ENCODE measurements at regions of chr14 and their contacts with region 1.

Region 1: GRCh38 chr14:100285021-100285912 is 21.0 kb downstream of the SLC25A29 start:
- DNase-seq: peak; percentile 88

Region 2: GRCh38 chr14:100239840-100240724 is 45.2 kb before region 1 on chr14:
- intact Hi-C with region 1: loop called (anchors 2 kb)
- DNase-seq: peak; percentile 93

Region 3: DNA sequence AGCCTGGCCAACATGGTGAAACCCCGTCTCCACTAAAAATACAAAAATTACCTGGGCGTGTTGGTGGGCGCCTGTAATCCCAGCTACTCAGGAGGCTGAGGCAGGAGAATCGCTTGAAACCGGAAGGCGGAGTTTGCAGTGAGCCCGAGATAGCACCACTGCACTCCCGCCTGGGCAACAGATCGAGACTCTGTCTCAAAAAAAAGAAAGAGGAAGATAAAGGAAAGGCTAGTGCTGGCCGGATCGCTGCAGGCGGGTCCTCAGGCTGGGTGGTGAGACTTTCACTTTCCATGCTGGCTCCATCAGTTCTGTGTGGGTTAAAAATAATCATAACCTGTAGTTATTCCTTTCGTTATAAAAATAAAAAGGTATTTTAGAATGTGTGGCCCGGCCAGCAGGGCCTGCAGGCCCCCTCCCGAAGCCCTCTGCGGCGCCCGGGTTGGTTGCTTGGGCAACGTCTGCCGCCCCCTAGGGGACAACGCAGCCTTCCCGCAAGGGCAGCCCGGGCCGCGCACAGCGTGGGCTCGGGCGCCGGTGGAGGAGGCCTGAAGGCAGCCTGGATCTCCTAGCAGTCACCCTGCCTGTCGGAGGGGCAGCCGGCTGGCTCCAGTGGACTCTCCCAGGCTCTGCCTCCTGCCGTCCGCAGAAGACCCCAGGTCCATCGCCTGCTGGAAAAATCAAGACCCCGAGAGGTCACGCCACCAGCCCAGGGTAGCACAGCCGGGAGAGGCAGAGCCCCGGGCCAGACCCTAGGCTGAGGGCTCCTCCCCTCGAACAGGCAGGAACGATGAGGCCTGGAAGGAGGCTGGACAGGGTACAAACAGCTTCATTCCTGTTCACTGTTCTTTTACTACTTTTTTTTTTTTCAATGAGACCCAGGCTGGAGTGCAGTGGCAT is 32.9 kb after region 1 on chr14:
- intact Hi-C with region 1: no loop called
- DNase-seq: peak; percentile 86